Tibial artery (tissue), 4 donors: ENCODE measurements at regions of chr17 and their contacts with region 1.

Region 1: GRCh38 chr17:66373944-66374817 is 71.8 kb downstream of the PRKCA start:
- DNase-seq: peak in 1 of 2 donors; percentile 24
- H3K4me3 ChIP-seq: no peak overlapping the region
- H3K27ac ChIP-seq: no peak overlapping the region
- H3K4me1 ChIP-seq: no peaks in the 10 kb centered on the region
- H3K27me3 ChIP-seq: no peaks in the 10 kb centered on the region
- CTCF ChIP-seq: no peak

Region 2: DNA sequence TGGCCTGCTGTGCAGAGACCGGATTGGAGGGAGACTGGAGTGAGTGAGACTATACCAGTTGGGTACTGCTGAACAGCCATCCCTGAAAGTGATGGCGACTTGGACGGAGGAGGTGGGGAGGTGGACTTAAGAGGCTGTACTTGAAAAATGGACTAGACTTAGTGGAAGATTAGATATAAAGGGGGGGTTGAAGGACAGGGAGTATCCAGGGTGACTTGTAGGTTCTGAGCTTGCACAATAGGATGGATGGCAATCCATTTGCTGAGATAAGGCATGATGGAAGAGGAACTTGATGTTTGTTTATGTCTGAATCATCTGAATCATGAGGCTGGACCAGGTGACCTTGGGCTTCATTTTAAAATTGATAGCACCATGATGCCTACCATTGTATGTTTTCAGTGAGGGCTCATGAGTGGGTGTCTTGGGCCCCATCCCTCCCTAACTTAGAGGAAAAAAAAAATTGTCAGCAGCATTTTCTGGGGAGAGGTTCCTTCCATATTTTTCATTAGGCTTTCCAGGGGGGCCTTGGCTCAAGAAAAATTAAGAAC is 30.6 kb before region 1 on chr17:
- intact Hi-C with region 1: loop called (anchors 2 kb)
- DNase-seq: no peak
- H3K4me3 ChIP-seq: no peak overlapping the region
- H3K27ac ChIP-seq: no peak overlapping the region
- H3K4me1 ChIP-seq: peaks cover 0 to 29% (median 6%) of the 10 kb centered on the region in 4 donors
- H3K27me3 ChIP-seq: no peaks in the 10 kb centered on the region
- CTCF ChIP-seq: no peak

Region 3: DNA sequence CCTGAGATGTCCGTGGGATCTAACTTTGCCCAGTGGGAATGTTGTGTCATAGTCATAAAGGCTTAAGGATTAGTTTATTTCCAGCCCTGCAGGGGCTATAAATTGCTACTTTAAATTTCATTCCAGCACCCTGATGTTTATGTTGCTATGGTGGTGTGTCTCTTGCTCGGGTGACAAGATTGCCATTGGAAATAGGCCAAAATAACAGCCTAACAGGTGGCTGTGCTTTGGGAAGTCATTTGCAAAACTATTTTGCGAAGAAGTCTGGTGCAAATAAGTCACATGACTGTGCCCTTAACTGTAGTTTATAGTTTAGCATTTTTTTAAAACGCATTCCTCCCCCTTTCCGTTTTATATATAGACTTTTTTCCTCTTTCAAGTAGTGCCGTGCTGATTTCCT is 1026.0 kb after region 1 on chr17:
- intact Hi-C with region 1: no loop called
- DNase-seq: no peak
- H3K4me3 ChIP-seq: no peak overlapping the region
- H3K27ac ChIP-seq: no peak overlapping the region
- H3K4me1 ChIP-seq: peaks cover 0 to 5% (median 0%) of the 10 kb centered on the region in 4 donors
- H3K27me3 ChIP-seq: no peaks in the 10 kb centered on the region
- CTCF ChIP-seq: no peak